Sigmoid colon (tissue), 7 donors: ENCODE measurements at regions of chr7 and their contacts with region 1.

Region 1: DNA sequence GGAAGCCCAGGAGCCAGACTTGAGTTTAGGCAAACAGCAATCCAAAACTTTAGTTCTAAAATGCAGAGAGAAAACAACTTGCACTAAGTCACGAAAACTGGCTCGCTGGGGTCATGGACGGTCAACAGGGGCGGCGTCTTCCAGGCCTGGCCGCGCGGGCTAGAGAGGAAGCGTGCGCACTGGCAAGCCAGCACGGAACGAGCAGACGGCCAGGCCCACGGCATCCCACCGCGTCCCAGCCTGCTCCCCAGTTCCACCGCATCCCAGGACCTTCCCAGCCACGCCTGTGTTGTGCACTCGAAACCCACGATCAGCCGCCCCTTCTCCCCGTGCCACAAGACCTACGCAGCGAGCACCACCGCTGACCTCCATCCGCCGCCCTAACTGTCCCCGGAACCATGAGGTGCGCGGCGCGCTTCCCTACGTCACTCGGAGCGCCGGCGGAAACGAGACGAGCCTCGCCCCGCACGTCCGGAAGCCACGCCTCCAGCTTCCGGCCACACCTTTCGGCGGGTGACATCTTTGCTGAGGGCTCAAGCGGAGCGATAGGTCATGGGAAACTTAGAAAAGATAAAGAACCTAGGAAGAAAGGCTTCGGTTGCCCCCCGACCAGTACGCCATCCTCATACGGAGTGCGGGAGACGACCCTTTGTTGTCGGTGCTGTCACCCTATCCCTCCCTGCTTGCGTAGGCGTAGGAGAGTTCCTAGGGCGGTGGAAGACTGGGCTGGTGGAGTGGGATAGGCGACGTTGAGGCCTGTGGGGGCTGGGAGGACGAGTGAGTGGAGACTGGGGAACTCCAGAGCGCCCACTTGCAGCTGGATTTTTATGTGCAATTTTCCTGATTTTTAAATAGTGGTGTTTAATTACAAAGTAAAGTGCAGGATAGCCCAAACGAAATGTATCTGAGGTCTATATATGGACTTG is at the start of gene TBRG4:
- DNase-seq: peak; percentile 96
- H3K4me3 ChIP-seq: peak within 1 kb of the TSS; percentile 66 to 85 (median 71)
- H3K27ac ChIP-seq: peak within 1 kb of the TSS; percentile 88 to 93 (median 90)
- H3K4me1 ChIP-seq: peaks cover 0 to 48% (median 44%) of the 10 kb centered on the region in 4 donors
- H3K27me3 ChIP-seq: no peaks in the 10 kb centered on the region
- CTCF ChIP-seq: peak in 1 of 4 experiments; percentile 14
- EP300 ChIP-seq: peak in 2 of 4 donors; percentile 22 to 53
- POLR2A ChIP-seq: peak; percentile 88 to 91
- total RNA-seq, gene TBRG4: 40.3 to 57.1 (median 46.8) TPM

Region 2: GRCh38 chr7:44606450-44607254 is 504.9 kb before region 1 on chr7 and contains the start of gene OGDH:
- intact Hi-C with region 1: loop called (anchors 10 kb)
- DNase-seq: peak; percentile 100
- H3K4me3 ChIP-seq: peak within 1 kb of the TSS; percentile 70 to 97 (median 78)
- H3K27ac ChIP-seq: peak within 1 kb of the TSS; percentile 97 to 100 (median 98)
- H3K4me1 ChIP-seq: peaks cover 0 to 32% (median 25%) of the 10 kb centered on the region in 4 donors
- H3K27me3 ChIP-seq: no peaks in the 10 kb centered on the region
- CTCF ChIP-seq: no peak
- EP300 ChIP-seq: peak in 2 of 4 donors; percentile 66 to 86
- POLR2A ChIP-seq: peak; percentile 57 to 97
- total RNA-seq, gene OGDH: 65.5 to 102 (median 98.3) TPM

Region 3: DNA sequence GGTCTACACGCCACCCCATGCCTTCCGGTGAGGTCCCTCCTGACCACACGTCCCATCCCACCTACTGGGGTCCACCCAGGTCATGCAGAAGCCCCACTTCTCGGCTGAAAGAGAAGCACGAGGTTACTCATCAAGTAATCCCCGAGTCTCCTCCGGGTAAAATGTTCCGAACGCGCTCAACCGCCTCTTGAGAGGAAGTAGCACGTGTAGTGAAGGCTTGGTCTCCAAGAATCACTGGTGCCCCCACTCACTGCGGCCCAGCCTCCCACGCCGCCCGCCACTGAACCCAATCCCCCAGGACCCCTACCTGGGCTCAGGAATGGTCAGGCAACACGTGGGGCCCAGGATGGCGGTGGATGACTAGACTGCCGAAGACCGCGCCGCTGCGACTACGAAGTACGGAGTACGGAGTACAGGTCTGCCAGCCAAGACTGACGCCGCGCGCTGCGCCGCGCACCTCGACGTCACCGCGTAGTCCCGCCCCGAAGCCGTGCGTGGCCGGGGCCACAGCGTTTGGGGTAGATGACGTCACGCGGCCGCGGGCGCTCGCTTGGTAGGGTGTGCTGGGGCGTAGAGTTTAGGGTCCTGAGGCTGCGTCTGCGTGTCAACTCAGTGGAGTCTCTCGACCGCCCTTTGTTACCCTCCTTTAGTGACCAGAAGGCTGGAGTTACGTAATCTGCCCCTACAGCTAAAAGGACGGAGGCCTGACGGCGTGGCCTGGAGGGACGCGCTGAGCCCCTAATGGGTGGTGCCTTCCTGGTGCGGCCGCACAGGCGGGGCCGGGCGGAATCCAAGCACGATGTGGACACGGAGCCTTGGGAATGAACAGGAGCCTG is 125.1 kb before region 1 on chr7:
- intact Hi-C with region 1: loop called (anchors 1 kb)
- DNase-seq: peak; percentile 96
- H3K4me3 ChIP-seq: peak overlapping the region; percentile 38 to 62 (median 55)
- H3K27ac ChIP-seq: peak overlapping the region; percentile 88 to 94 (median 91)
- H3K4me1 ChIP-seq: peaks cover 0 to 25% (median 16%) of the 10 kb centered on the region in 4 donors
- H3K27me3 ChIP-seq: no peaks in the 10 kb centered on the region
- CTCF ChIP-seq: no peak
- EP300 ChIP-seq: peak in 2 of 4 donors; percentile 1 to 10
- POLR2A ChIP-seq: peak; percentile 91 to 93

Region 4: DNA sequence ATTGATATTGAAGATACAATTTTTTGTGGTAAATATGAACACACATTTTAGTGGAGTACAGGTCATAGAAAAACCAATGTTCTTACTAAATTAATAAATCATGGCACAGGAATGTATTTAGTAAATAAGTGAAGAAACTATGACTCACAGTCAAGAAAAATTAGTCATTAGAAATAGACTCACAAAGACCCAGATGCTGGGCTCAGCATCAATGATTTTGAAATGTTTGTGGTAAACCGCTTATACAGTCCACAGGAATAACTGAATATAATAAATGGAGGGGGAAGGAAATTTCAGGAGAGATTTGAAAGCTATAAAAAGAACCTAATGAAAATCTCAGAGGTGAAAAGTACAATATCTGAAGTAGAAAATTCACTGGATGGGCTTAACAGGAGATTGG is 324.3 kb after region 1 on chr7:
- intact Hi-C with region 1: no loop called
- DNase-seq: no peak
- H3K4me3 ChIP-seq: no peak overlapping the region
- H3K27ac ChIP-seq: no peak overlapping the region
- H3K4me1 ChIP-seq: no peaks in the 10 kb centered on the region
- H3K27me3 ChIP-seq: no peaks in the 10 kb centered on the region
- CTCF ChIP-seq: no peak
- EP300 ChIP-seq: no peak
- POLR2A ChIP-seq: no peak